Adrenal gland (tissue), 19 donors: ENCODE measurements at regions of chr5 and their contacts with region 1.

Region 1: DNA sequence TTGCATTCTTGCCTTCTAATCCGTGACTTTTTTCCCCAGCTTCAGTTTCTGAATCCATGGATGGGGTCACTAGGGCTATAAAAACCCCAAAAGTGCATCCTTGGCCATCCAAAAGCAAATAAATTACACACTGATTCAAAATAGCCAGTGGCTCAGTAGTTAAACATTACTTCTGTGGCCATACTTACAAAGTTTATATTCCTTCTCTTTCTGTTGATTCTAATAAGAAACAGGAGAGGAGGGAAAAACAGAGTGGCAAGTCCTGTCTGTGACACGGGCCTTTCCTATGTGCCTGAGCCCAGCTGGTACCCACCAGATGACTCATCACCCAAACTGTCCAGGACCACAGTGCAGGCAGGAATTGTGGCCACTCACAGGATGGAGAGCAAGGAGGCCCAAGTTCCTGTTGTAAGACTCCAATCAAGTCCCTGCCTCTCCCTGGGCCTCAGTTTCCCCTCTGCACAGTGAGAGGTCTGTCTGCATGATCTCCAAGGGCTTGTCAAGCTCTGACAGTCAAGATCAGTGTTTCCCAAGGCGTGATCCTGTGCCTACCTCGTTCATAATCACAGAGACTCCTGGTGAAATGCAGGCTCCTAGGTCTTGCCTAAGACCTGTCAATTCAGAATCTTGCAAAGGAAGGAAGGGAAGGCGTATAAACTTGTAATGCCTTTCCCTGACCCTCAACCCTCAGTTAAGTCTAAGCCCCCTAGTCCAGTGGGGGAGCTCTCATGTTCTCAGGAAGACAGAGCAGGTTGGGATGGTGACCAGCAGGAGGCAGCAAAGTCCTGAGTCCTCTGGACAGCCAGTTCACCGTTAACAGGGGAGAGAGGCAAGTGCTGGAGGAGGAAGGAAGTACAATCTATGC is 29.5 kb downstream of the TNIP1 start:
- DNase-seq: peak; percentile 81 to 94 (median 87)
- H3K4me3 ChIP-seq: no peak overlapping the region
- H3K27ac ChIP-seq: peak overlapping the region in 1 of 5 donors; percentile 33
- H3K4me1 ChIP-seq: peaks cover 0 to 7% of the 10 kb centered on the region in 2 donors
- H3K27me3 ChIP-seq: no peaks in the 10 kb centered on the region
- CTCF ChIP-seq: peak; percentile 72 to 97 (median 91)
- POLR2A ChIP-seq: no peak

Region 2: DNA sequence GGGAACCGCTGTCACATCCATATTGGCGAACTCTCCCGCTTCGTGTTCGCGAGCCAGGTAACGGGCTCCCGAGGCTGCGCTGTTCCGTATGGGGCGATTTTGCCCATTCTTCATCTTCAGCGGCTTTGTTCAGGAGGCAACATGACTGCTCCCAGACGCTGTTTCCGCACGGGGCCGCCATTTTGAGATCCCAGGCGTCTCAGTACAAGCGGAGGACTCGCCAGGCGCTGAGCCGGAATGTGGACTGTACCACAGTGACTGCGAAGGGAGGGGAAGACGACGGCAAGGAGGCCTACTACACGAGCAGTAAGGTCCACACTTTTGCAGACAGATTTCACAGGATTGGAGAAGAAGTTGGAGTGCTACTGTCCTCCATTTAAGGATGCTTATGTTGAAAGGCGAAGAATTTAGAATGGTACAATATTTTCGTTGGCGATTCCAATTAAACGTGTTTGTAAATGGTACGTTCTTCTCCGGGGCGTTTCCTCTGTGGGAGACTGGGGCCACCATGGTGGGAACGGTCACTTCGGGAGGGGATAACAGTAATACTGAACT is 104.9 kb before region 1 on chr5:
- intact Hi-C with region 1: no loop called
- DNase-seq: peak; percentile 68 to 79 (median 76)
- H3K4me3 ChIP-seq: peak overlapping the region in 2 of 4 donors; percentile 10 to 62
- H3K27ac ChIP-seq: peak overlapping the region in 4 of 5 donors; percentile 3 to 85 (median 45)
- H3K4me1 ChIP-seq: peaks cover 0 to 6% of the 10 kb centered on the region in 2 donors
- H3K27me3 ChIP-seq: no peaks in the 10 kb centered on the region
- CTCF ChIP-seq: no peak
- POLR2A ChIP-seq: peak in 1 of 2 donors; percentile 25

Region 3: DNA sequence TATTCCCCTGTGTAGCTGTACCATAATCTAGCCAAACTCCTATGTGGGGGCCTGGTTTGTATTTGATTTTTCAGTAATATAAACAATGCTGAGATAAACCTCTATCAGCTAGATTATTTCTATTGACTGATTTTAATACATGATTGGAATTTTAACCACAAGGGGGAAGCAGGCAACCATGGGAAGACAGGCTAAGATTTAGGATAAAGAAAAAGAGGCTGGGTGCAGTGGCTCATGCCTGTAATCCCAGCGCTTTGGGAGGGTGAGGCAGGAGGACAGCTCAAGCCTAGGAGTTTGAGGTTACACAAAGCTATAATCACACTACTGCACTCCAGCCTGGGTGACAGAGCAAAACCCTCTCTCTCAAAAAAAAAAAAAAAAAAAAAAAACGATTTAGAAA is 49.0 kb before region 1 on chr5:
- intact Hi-C with region 1: loop called (anchors 5 kb)
- DNase-seq: peak in 5 of 7 donors; percentile 30 to 58 (median 43)
- H3K4me3 ChIP-seq: no peak overlapping the region
- H3K27ac ChIP-seq: no peak overlapping the region
- H3K4me1 ChIP-seq: peaks cover 22 to 29% of the 10 kb centered on the region in 2 donors
- H3K27me3 ChIP-seq: no peaks in the 10 kb centered on the region
- CTCF ChIP-seq: peak; percentile 41 to 83 (median 74)
- POLR2A ChIP-seq: no peak

Region 4: GRCh38 chr5:151115274-151115905 is 64.1 kb after region 1 on chr5:
- intact Hi-C with region 1: loop called (anchors 2 to 5 kb)
- DNase-seq: peak; percentile 68 to 89 (median 82)
- H3K4me3 ChIP-seq: no peak overlapping the region
- H3K27ac ChIP-seq: no peak overlapping the region
- H3K4me1 ChIP-seq: peaks cover 0 to 11% of the 10 kb centered on the region in 2 donors
- H3K27me3 ChIP-seq: no peaks in the 10 kb centered on the region
- CTCF ChIP-seq: peak; percentile 90 to 96 (median 94)
- POLR2A ChIP-seq: no peak

Region 5: DNA sequence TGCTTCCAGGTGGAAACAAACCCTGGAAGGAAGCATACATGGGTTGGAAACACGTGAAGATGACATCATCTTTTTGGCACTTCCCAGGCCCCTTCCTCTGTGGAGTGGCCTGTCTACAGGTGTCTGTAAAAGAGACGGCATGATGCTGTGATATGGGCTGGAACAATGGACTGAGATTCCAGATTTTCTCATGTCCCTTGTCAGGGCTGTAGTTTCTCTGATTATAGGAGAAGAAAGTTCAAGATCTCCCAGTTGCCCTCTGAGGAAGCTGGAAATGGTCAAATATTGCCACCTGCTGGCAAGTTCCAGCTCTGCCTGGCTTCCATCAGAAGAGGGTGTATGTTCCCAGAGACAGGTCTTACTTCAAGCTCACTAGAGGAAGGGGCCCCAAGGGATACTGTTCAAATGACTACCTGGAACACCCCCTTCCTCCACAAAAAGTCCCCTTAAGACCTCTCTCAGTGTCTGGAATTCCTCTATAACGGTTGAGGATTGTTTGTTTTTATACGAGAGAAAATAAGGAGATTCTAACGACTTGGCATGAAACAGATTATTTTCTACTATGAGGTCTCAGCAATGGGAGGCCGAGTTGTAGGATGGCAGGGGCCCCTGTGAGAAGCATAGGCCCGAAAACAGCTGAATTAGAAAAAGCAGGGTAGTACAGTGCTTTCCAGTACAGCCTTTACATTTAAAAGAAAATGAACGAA is 113.5 kb after region 1 on chr5:
- intact Hi-C with region 1: loop called in 1 of 2 experiments (anchors 5 kb)
- DNase-seq: peak; percentile 68 to 91 (median 79)
- H3K4me3 ChIP-seq: no peak overlapping the region
- H3K27ac ChIP-seq: no peak overlapping the region
- H3K4me1 ChIP-seq: peaks cover 7 to 13% of the 10 kb centered on the region in 2 donors
- H3K27me3 ChIP-seq: no peaks in the 10 kb centered on the region
- CTCF ChIP-seq: peak; percentile 73 to 94 (median 92)
- POLR2A ChIP-seq: no peak

Region 6: DNA sequence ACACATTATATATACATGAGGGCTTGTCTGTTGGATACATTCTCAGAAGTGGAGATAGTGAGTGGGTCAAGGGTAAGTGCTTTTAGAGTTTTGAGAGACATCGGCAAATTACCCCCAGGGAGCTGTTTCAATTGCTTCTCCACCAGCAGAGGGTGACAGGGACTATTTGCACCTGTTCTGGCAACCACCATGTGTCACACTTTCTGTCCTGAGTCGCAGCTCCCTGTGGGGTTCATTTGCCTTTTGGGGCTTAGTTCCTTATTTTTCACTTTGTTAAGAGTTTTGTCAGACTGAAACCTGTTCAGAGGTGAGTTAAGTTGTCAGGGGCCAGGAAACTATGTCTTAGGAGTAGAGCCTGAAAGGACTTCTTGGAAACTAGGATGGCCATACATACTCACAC is 376.0 kb after region 1 on chr5:
- intact Hi-C with region 1: no loop called
- DNase-seq: no peak
- H3K4me3 ChIP-seq: no peak overlapping the region
- H3K27ac ChIP-seq: no peak overlapping the region
- H3K4me1 ChIP-seq: no peaks in the 10 kb centered on the region
- H3K27me3 ChIP-seq: no peaks in the 10 kb centered on the region
- CTCF ChIP-seq: no peak
- POLR2A ChIP-seq: no peak